Psoas muscle (tissue), 8 donors: ENCODE measurements at regions of chr2 and their contacts with region 1.

Region 1: DNA sequence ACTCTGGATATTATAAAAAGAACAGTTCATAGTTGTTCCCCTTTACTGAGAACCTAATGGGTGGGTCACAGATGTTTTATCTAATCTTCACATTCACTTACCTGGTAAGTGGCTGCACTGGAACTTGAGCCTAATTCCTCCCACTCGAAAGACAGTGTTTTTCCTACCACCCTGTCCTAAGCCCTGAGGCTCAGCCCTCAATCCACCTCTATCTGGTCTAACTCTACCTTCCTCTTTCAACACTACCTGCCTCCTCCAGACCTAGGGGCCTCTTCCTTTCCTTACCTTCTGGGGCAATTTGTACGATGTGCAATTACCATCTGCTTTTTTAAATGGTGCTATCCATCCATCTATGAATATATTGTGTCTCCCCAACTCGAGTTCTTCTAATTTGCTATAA is 9.7 kb upstream of the KIF3C start:
- DNase-seq: no peak
- ATAC-seq: peak; percentile 15 to 49 (median 38)
- H3K4me3 ChIP-seq: peak overlapping the region; percentile 52
- H3K27ac ChIP-seq: peak overlapping the region; percentile 77
- H3K4me1 ChIP-seq: peaks cover 10% of the 10 kb centered on the region
- H3K27me3 ChIP-seq: no peaks in the 10 kb centered on the region
- CTCF ChIP-seq: no peak

Region 2: GRCh38 chr2:25951071-25951547 is 40.9 kb before region 1 on chr2:
- intact Hi-C with region 1: loop called in 1 of 2 experiments (anchors 2 kb)
- DNase-seq: peak; percentile 70 to 90
- ATAC-seq: peak; percentile 96 to 99 (median 98)
- H3K4me3 ChIP-seq: peak overlapping the region; percentile 37
- H3K27ac ChIP-seq: peak overlapping the region; percentile 46
- H3K4me1 ChIP-seq: no peaks in the 10 kb centered on the region
- H3K27me3 ChIP-seq: no peaks in the 10 kb centered on the region
- CTCF ChIP-seq: peak; percentile 98

Region 3: GRCh38 chr2:26033818-26034636 is 42.1 kb after region 1 on chr2 and contains the start of gene RAB10:
- intact Hi-C with region 1: loop called (anchors 5 kb)
- DNase-seq: peak; percentile 100
- ATAC-seq: peak; percentile 93 to 97 (median 94)
- H3K4me3 ChIP-seq: peak within 1 kb of the TSS; percentile 97
- H3K27ac ChIP-seq: peak within 1 kb of the TSS; percentile 98
- H3K4me1 ChIP-seq: peaks cover 27% of the 10 kb centered on the region
- H3K27me3 ChIP-seq: no peaks in the 10 kb centered on the region
- CTCF ChIP-seq: no peak
- total RNA-seq, gene RAB10: 131 to 164 (median 149) TPM

Region 4: GRCh38 chr2:26088032-26088643 is 96.2 kb after region 1 on chr2:
- intact Hi-C with region 1: loop called (anchors 2 to 10 kb)
- DNase-seq: no peak
- ATAC-seq: peak; percentile 57 to 81 (median 65)
- H3K4me3 ChIP-seq: no peak overlapping the region
- H3K27ac ChIP-seq: peak overlapping the region; percentile 70
- H3K4me1 ChIP-seq: peaks cover 42% of the 10 kb centered on the region
- H3K27me3 ChIP-seq: no peaks in the 10 kb centered on the region
- CTCF ChIP-seq: peak; percentile 83

Region 5: GRCh38 chr2:26144953-26145680 is 153.2 kb after region 1 on chr2:
- intact Hi-C with region 1: loop called (anchors 1 to 2 kb)
- DNase-seq: peak; percentile 59 to 66
- ATAC-seq: peak; percentile 78 to 83 (median 82)
- H3K4me3 ChIP-seq: no peak overlapping the region
- H3K27ac ChIP-seq: no peak overlapping the region
- H3K4me1 ChIP-seq: no peaks in the 10 kb centered on the region
- H3K27me3 ChIP-seq: no peaks in the 10 kb centered on the region
- CTCF ChIP-seq: peak; percentile 88